ENCODE measurements at regions of chr4 and their contacts with region 1.

Region 1: DNA sequence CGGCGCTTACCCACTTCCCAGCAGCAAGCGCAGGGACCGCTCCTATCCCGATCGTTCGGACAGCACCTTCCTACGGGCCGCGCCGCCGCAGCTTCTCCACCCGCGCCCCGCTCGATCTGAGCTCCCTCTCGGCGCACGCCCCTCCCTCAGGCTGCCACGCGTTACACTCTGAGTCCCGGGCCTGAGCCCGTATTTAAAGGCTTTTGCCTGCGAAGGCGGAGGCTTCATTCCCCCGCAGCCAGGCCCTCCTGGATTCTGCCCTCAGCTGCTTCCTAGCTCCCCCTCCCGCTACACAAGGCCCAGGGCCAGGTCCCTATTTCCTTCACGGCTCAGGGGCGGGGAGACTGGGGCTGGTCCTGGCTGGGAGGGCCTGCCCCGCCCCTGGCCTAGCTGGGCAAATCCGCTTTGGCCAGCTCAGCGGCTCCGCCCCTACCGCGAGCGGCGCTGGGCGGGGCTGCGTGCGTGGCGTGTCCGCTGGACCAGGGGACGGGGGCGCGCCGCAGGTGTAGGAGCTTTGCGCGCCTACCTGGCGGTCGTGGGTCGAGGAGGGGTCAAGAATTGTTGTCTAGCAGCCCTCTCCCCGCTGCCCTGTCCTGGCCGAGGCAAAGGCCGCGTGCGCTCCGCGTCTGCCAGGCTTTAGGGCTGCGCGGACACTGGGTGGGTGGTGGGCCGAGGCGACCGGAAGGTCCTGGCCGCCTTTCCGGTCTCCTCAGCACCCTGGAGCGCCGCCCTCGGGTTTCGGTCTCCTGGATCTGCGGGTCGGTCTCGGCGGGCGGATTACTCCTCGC is at the start of gene UGDH:
- DNase-seq: peak; percentile 89 to 99 (median 96)
- H3K4me3 ChIP-seq: peak within 1 kb of the TSS; percentile 59 to 99 (median 94)
- H3K27ac ChIP-seq: peak within 1 kb of the TSS; percentile 70 to 99 (median 95)
- H3K27me3 ChIP-seq: no peaks in the 10 kb centered on the region
- CTCF ChIP-seq: peak in 35 of 56 donors; percentile 3 to 56 (median 31)
- total RNA-seq, gene UGDH: 8.7 to 26.5 (median 15.0) TPM

Region 2: DNA sequence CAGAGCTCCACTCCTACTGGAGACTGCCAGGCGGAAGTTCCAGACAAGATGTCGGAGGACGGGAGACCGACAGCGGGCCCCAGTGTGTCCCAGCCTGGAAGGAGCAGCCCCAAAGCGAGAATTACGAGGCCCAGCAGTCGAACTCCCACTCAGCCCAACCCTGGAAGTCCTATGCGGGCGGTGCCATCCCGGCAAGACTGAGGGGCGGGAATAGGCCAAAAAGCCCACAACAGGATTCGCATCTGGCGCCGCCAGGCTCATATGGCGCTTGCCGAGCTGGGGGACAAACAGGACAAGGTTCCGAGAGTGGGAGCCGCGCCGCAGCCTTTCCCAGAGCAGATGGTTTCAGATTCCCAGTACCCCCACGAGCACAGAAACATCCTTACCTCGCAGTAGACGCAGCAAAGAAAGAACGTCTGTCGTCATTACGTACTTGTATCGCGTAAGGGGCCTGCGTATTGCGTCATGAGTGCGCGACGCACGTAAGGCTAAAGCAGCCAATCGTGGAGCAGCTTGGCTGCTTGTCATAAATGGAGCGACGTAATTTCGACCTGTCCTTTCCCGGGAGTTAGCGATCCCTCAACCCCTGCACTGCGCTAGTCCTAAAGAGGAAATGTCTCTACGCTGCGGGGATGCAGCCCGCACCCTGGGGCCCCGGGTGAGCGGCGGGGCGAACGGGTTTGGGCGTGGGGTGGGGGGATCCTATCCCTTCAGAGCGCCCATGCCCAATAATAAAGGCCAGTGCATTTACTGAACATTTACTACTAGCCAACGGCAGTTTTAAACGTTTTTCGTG is 68.8 kb before region 1 on chr4 and contains the starts of genes LIAS and RPL9:
- intact Hi-C with region 1: loop called in 1 of 2 experiments (anchors 5 kb)
- DNase-seq: peak; percentile 88 to 97 (median 93)
- H3K4me3 ChIP-seq: peak within 1 kb of the TSS; percentile 63 to 99 (median 91)
- H3K27ac ChIP-seq: peak within 1 kb of the TSS; percentile 3 to 98 (median 92)
- H3K27me3 ChIP-seq: no peaks in the 10 kb centered on the region
- CTCF ChIP-seq: peak in 17 of 56 donors; percentile 3 to 30 (median 14)
- total RNA-seq, gene LIAS: 16.1 to 30.6 (median 22.3) TPM
- total RNA-seq, gene RPL9: 295 to 743 (median 520) TPM

Region 3: DNA sequence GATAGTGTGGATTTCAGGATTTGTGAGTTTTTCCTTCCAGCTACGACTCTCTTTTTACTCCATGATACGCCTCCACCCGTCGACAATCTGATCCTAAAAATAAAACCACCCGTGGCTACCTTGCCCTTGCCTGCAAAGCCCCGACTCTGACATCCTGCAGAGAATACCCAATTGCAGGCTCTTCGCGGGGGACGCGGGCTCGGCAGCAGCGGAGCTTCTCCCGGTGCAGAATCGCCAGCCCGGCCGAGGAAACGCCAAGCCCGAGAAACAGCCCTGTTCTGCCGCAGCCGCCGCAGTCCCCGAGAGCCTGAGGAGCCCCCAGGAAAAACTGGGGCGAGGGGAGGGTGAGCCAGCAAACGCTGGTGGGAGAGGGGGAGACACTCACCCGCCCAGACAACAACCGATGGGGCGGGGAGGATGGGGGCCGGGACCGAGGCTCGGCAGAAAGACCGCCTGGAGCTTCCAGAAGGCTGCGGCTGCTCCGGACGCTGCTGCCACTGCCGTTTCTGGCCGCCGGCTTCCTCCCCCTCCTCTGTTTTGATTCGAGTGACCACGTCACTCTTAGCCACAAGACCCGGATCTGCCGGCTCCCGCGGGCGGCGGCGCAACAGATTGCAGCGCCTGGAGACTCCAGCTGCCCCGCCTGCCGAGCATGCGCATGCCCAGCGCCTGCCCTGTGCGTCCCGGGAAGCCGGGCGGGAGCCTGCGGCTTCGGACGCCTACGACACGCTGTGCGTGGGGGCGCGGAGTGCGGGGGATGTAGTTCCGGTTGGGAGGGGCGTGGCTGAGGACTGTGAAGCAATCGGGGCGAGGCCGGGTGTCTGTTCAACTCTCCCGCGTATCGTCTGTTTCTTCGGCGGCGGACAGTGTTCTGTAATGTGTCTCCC is 111.1 kb after region 1 on chr4 and contains the start of gene SMIM14:
- intact Hi-C with region 1: loop called (anchors 1 kb)
- DNase-seq: peak; percentile 97 to 100 (median 98)
- H3K4me3 ChIP-seq: peak within 1 kb of the TSS; percentile 69 to 98 (median 91)
- H3K27ac ChIP-seq: peak within 1 kb of the TSS; percentile 87 to 100 (median 99)
- H3K27me3 ChIP-seq: no peaks in the 10 kb centered on the region
- CTCF ChIP-seq: peak in 46 of 56 donors; percentile 6 to 67 (median 38)
- total RNA-seq, gene SMIM14: 22.3 to 73.2 (median 50.5) TPM

Region 4: DNA sequence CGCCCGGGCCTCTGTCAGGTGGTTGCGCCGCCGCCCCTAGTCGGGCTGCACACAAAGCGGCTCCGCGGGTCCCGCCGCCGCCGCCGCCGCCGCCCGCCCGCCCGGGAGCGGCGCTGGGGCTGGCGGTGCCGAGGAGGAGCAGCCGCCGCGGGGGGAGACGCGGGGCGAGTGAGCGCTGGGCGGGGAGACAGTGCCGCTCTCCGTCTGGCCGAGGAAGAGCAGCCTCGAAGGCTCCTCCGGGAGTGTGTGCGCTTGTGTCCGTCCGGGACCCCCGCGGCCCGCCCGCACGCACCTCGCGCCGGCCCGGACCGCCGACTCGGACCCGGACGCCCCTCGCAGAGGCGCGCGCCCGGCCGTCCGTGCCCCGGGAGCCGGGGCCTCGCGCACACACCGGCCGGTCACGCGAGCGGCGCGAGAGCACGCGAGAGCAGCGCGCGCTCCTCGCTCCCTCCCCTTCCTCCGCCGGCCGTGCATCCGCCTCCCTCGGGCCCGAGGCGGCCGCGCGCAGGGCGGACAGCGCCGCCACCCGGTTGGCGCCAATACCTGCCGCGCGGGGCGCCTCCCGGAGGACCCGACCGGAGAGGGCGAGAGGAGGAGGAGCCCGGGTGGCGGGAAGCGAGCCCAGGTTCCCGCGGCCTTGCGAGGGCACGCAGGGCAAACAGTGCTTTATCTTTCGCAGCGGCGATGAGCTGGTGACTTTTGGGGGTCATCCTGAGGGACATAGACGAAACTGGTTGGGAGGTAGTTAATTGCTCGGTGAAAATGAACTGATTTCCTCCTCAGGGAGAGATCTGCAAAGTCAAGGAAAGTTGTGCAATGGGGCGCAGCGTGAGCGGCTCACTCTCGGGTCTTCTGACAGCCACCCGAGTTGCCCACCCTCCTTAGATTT is 450.3 kb after region 1 on chr4 and contains the start of gene PDS5A:
- intact Hi-C with region 1: loop called (anchors 1 to 2 kb)
- DNase-seq: peak; percentile 67 to 89 (median 81)
- H3K4me3 ChIP-seq: peak within 1 kb of the TSS; percentile 62 to 98 (median 93)
- H3K27ac ChIP-seq: peak within 1 kb of the TSS; percentile 84 to 98 (median 95)
- H3K27me3 ChIP-seq: no peaks in the 10 kb centered on the region
- CTCF ChIP-seq: peak; percentile 54 to 93 (median 80)
- total RNA-seq, gene PDS5A: 43.7 to 92.5 (median 61.9) TPM